Endothelial cell of umbilical vein (primary cell): ENCODE measurements at regions of chr1 and their contacts with region 1.

Region 1: GRCh38 chr1:82395440-82395839 is 594.7 kb downstream of the ADGRL2 start:
- DNase-seq: no peak
- H3K4me3 ChIP-seq: no peak overlapping the region
- H3K27ac ChIP-seq: no peak overlapping the region
- H3K4me1 ChIP-seq: peaks cover 26% of the 10 kb centered on the region
- H3K27me3 ChIP-seq: no peaks in the 10 kb centered on the region
- CTCF ChIP-seq: no peak
- POLR2A ChIP-seq: no peak

Region 2: DNA sequence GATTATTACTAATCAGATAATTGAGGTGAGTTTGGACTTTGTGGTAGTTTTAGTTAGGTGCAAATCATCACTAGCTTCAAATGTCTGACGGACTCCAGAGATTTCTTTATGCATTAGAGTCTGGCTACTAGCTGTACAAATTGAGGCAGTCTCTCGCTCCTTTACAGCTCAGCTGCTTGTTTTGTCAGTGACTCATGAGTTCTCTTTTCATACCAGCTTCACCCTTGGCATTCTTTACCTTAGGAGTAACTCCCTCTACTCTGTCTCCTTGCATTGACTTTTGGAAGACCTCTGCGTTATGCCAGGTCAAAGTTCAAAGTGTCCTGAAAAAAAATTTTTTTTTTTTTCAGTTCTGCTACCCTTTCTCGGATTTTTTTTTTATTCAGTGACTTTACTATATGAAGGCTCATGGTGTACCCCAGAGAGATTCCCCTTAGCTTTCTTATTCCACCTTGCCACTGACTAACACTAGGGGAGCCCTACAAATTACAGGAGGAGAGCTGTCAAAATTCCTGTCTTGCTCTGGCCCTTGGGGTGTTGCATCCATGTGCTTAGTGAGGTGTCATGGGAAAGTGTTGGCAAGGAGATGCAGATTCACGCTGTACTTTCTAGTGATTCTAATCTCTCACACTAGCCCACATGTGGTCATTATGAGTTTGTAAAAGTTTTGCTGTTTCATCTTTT is 18.1 kb before region 1 on chr1:
- CTCF ChIA-PET with region 1: interaction called, 4 read pairs
- POLR2A ChIA-PET with region 1: interaction called, 3 read pairs
- dilution Hi-C with region 1: no loop called
- intact Hi-C with region 1: loop called (anchors 2 kb)
- DNase-seq: peak; percentile 28
- H3K4me3 ChIP-seq: no peak overlapping the region
- H3K27ac ChIP-seq: no peak overlapping the region
- H3K4me1 ChIP-seq: no peaks in the 10 kb centered on the region
- H3K27me3 ChIP-seq: no peaks in the 10 kb centered on the region
- CTCF ChIP-seq: no peak
- POLR2A ChIP-seq: no peak

Region 3: GRCh38 chr1:82565146-82565545 is 169.7 kb after region 1 on chr1:
- CTCF ChIA-PET with region 1: interaction called, 3 read pairs
- POLR2A ChIA-PET with region 1: no interaction called
- dilution Hi-C with region 1: no loop called
- intact Hi-C with region 1: loop called (anchors 5 kb)
- DNase-seq: no peak
- H3K4me3 ChIP-seq: no peak overlapping the region
- H3K27ac ChIP-seq: peak overlapping the region; percentile 22
- H3K4me1 ChIP-seq: peaks cover 11% of the 10 kb centered on the region
- H3K27me3 ChIP-seq: no peaks in the 10 kb centered on the region
- CTCF ChIP-seq: peak in 1 of 2 donors; percentile 6
- POLR2A ChIP-seq: no peak